HEK293T (cell line): ENCODE measurements at regions of chr9 and their contacts with region 1.

Region 1: GRCh38 chr9:113857875-113858274 is 18.2 kb upstream of the ZNF618 start:
- DNase-seq: no peak

Region 2: DNA sequence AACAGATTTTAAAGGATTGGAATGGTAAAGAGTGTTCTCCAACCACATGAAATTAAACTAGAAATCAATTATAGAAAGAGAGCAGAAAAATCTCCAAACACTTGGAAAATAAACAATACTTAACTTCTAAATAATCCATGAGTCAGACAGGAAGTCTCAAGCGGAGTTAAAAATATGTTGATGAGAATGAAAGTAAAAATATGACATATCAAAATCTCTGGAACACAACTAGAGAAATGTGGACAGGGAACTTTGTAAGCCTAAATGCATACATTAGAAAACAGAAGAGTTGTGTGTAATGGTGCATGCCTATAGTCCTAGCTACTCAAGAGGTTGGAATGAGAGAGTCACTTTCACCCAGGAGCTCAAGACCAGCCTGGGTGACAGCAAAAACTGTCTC is 29.7 kb before region 1 on chr9:
- CTCF ChIA-PET with region 1: no interaction called
- POLR2A ChIA-PET with region 1: no interaction called
- DNase-seq: no peak

Region 3: GRCh38 chr9:113876151-113876992 is 18.5 kb after region 1 on chr9 and contains the start of gene ZNF618:
- CTCF ChIA-PET with region 1: interaction called, 11 read pairs
- POLR2A ChIA-PET with region 1: no interaction called
- DNase-seq: peak; percentile 65